ENCODE measurements at regions of chr19 and their contacts with region 1.

Region 1: DNA sequence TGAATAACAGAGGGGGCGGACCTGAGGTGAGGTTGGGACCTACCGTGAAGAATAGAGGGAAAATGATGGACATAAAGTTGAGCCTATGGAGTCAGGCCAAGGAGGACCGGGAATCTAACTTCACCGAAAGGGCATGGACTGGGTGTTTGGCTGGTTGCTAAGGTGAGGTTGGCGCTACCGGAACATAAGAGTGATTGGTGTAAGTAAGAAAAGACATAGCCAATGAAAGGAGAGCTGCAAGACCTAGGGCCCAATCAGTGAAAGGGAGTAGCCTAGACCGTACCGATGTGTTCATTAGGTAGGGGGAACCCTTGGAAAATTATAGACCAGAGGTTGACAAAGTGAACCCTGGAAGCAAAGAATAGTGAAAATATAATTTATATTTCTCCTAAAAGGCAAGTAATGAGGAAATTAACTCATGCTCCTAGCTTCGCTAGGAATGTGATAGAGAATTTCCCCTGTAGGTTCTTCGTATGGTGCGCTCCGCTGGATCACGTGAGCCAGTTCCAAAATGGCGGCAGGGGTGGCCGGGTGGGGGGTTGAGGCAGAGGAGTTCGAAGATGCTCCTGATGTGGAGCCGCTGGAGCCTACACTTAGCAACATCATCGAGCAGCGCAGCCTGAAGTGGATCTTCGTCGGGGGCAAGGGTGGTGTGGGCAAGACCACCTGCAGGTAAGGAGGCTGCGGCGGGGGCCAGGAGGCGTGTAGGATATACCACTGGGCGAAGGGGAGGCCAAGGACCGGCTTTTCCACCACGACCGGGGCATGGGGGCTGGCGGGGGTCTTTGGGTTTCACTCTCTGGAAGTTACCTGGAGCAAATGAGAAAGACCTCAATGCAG is at the start of gene GET3:
- DNase-seq: peak; percentile 83
- H3K4me3 Mint-ChIP-seq: peak within 1 kb of the TSS; percentile 100
- H3K27ac Mint-ChIP-seq: peak within 1 kb of the TSS; percentile 89
- H3K4me1 Mint-ChIP-seq: peaks cover 46% of the 10 kb centered on the region
- H3K27me3 Mint-ChIP-seq: no peaks in the 10 kb centered on the region
- total RNA-seq, gene GET3: 61.8 to 62.9 TPM

Region 2: GRCh38 chr19:12716861-12717260 is 20.4 kb before region 1 on chr19:
- CTCF ChIA-PET with region 1: interaction called, 53 read pairs
- POLR2A ChIA-PET with region 1: interaction called, 250 read pairs
- DNase-seq: peak; percentile 57
- H3K4me3 Mint-ChIP-seq: no peak overlapping the region
- H3K27ac Mint-ChIP-seq: no peak overlapping the region
- H3K4me1 Mint-ChIP-seq: peaks cover 31% of the 10 kb centered on the region
- H3K27me3 Mint-ChIP-seq: no peaks in the 10 kb centered on the region

Region 3: DNA sequence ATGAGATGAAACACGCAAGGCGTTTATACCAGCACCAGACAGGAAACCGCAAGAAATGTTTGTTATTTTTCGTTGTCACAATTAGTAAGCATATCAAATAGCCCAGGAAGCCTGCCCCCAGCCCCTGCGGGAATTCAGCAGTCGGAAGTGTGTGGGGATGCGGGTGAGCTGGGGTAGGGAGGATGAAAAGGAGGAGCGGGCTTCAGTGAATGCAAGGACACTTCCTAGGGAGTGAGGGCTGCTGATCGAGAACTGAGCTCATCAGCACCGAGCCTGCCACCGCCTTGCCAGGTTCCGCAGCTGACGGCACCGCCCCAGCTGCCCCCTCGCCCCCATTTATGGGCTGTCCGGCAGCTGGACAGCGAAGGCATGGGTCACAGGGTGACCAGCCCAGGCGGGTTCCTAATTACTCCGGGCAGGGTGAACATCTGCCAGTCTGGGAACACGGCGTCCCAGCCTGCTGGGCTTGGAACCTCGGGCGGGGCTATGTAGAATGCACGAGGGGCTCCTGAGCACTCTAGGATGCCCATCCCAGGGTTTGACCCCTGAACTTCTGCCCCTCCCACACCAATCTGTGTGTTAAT is 12.8 kb after region 1 on chr19:
- CTCF ChIA-PET with region 1: interaction called, 136 read pairs
- POLR2A ChIA-PET with region 1: interaction called, 11 read pairs
- DNase-seq: no peak
- H3K4me3 Mint-ChIP-seq: no peak overlapping the region
- H3K27ac Mint-ChIP-seq: no peak overlapping the region
- H3K4me1 Mint-ChIP-seq: peaks cover 4% of the 10 kb centered on the region
- H3K27me3 Mint-ChIP-seq: peaks cover 9% of the 10 kb centered on the region

Region 4: DNA sequence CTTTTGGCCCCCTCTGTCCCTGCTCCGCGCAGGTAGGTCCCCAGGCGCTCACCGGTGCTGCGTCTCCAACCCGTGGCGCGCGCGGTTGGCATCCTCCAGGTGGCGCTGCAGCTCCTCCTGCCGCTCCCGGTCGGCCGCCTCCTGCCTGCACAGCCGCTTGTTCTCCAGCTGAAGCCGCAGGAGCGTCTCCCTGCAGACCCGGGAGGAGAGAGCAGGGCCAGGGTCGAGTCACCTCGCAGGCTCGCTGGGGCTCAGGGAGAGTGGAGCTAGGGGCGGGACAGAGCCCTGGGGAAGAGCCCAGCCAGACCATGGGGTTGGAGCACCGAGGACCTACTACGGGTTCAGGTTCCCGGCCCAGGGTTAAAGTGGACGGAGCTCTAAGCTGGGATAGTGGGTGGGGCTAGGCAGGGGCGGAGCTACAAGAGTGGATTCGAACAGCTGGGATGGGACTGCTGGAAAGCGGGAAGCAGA is 28.9 kb after region 1 on chr19:
- CTCF ChIA-PET with region 1: interaction called, 136 read pairs
- POLR2A ChIA-PET with region 1: interaction called, 5 read pairs
- DNase-seq: peak; percentile 86
- H3K4me3 Mint-ChIP-seq: peak overlapping the region; percentile 24
- H3K27ac Mint-ChIP-seq: no peak overlapping the region
- H3K4me1 Mint-ChIP-seq: peaks cover 16% of the 10 kb centered on the region
- H3K27me3 Mint-ChIP-seq: no peaks in the 10 kb centered on the region

Region 5: GRCh38 chr19:12782229-12783028 is 45.2 kb after region 1 on chr19:
- CTCF ChIA-PET with region 1: interaction called, 6 read pairs
- POLR2A ChIA-PET with region 1: interaction called, 13 read pairs
- DNase-seq: peak; percentile 87
- H3K4me3 Mint-ChIP-seq: peak overlapping the region; percentile 87
- H3K27ac Mint-ChIP-seq: no peak overlapping the region
- H3K4me1 Mint-ChIP-seq: peaks cover 48% of the 10 kb centered on the region
- H3K27me3 Mint-ChIP-seq: no peaks in the 10 kb centered on the region

Region 6: GRCh38 chr19:12796146-12797071 is 59.2 kb after region 1 on chr19:
- CTCF ChIA-PET with region 1: interaction called, 15 read pairs
- POLR2A ChIA-PET with region 1: interaction called, 66 read pairs
- DNase-seq: peak; percentile 81
- H3K4me3 Mint-ChIP-seq: peak overlapping the region; percentile 64
- H3K27ac Mint-ChIP-seq: peak overlapping the region; percentile 84
- H3K4me1 Mint-ChIP-seq: peaks cover 41% of the 10 kb centered on the region
- H3K27me3 Mint-ChIP-seq: no peaks in the 10 kb centered on the region

Region 7: DNA sequence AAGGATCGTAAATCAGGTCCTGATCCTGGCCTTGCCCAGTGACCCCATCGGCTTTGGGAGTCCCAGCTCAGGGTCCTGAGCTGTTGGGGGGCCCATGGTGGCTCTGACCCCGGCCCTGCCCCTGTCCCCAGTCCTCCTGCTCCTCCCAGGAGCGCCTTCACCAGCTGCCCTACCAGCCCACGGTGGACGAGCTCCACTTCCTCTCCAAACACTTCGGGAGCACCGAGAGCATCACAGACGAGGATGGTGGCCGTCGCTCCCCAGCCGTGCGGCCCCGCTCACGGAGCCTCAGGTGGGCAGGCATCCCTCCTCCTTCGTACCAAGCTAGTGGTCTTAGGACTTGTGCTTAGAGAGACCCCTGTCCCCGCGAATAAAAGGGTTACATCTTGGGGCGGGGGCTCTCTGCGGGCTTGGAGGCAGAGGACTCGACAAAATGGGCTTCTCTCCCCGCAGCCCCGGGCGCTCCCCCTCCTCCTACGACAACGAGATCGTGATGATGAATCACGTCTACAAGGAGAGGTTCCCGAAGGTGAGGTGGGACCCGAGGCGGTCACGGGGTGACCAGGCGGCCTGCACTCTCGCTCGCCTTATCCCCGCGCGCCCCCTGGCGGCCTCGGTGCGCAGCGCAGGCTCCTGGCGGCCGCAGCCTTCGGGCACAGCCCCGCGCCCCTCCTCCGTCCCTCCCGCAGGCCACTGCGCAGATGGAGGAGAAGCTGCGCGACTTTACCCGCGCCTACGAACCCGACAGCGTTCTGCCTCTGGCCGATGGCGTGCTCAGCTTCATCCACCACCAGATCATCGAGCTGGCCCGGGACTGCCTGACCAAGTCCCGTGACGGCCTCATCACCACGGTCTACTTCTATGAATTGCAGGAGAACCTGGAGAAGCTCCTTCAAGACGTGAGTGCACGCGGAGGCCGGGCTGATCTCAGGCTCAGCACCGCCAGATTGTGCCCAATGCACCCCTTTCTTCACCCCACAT is 110.2 kb after region 1 on chr19:
- CTCF ChIA-PET with region 1: interaction called, 10 read pairs
- POLR2A ChIA-PET with region 1: interaction called, 3 read pairs
- DNase-seq: peak; percentile 83
- H3K4me3 Mint-ChIP-seq: peak overlapping the region; percentile 21
- H3K27ac Mint-ChIP-seq: no peak overlapping the region
- H3K4me1 Mint-ChIP-seq: peaks cover 7% of the 10 kb centered on the region
- H3K27me3 Mint-ChIP-seq: peaks cover 13% of the 10 kb centered on the region

Measured in activated CD4-positive, alpha-beta memory T cell treated with anti-CD3 and anti-CD28 coated beads, Interleukin-2, amount 10 ng/mL, durations not matched to agents 7 days and 5 days (primary cell).